Activated CD4-positive, alpha-beta T cell treated with anti-CD3 and anti-CD28 coated beads for 36 hours (primary cell): ENCODE measurements at regions of chr12 and their contacts with region 1.

Region 1: GRCh38 chr12:48851883-48852733 is at the start of gene DDX23:
- DNase-seq: peak; percentile 96
- ATAC-seq: peak; percentile 97
- H3K4me3 Mint-ChIP-seq: peak within 1 kb of the TSS; percentile 96
- H3K27ac Mint-ChIP-seq: peak within 1 kb of the TSS; percentile 99
- H3K4me1 Mint-ChIP-seq: peaks cover 30% of the 10 kb centered on the region
- H3K27me3 Mint-ChIP-seq: no peaks in the 10 kb centered on the region
- total RNA-seq, gene DDX23: 115 to 120 TPM

Region 2: DNA sequence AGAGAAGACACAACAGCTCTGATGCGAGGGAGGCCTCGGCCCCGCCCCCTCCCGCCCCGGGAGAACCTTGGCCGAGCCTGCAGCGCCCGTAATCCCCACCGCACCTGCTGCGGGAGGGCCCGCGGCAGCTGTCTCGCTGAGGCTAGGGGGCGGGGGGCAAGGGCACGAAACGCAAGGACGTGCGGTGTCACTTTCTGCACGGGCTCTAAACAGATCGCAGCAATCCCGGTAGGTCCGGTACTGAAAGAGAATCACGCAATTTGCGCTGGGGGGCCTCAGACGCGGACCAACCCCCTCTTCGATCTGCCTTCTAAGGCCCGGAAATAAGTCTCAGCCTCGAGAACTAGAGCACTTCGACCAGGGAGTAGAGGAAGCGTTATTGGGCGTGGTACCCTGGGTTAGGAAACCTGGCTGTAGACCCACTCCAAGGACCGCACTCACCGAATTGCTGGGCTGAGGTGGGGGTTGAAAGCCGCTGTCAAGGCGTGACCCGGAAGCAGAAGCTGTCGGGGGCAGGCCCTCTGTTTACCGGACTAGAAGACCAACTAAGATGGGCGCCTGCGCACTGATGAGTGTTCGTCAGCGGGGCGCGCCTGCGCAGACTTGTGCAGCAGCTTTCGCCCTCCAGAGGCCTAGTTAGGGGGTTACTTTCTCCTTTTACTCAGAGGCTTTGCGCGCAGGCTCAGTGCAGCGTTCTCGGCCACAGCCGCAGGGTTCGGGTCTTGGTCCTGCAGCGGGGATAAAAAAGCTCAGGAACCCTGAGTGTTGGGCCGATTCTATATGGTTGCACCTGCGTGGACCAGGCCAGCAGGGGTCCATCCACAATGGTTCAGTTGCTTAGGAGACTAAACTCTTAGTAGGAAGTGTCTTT is 694.9 kb before region 1 on chr12 and contains the start of gene ASB8:
- CTCF ChIA-PET with region 1: no interaction called
- POLR2A ChIA-PET with region 1: no interaction called
- intact Hi-C with region 1: loop called in 1 of 2 experiments (anchors 2 kb)
- DNase-seq: peak; percentile 100
- ATAC-seq: peak; percentile 96
- H3K4me3 Mint-ChIP-seq: peak within 1 kb of the TSS; percentile 88
- H3K27ac Mint-ChIP-seq: peak within 1 kb of the TSS; percentile 94
- H3K4me1 Mint-ChIP-seq: peaks cover 40% of the 10 kb centered on the region
- H3K27me3 Mint-ChIP-seq: no peaks in the 10 kb centered on the region
- total RNA-seq, gene ASB8: 28.8 to 33.0 TPM

Region 3: DNA sequence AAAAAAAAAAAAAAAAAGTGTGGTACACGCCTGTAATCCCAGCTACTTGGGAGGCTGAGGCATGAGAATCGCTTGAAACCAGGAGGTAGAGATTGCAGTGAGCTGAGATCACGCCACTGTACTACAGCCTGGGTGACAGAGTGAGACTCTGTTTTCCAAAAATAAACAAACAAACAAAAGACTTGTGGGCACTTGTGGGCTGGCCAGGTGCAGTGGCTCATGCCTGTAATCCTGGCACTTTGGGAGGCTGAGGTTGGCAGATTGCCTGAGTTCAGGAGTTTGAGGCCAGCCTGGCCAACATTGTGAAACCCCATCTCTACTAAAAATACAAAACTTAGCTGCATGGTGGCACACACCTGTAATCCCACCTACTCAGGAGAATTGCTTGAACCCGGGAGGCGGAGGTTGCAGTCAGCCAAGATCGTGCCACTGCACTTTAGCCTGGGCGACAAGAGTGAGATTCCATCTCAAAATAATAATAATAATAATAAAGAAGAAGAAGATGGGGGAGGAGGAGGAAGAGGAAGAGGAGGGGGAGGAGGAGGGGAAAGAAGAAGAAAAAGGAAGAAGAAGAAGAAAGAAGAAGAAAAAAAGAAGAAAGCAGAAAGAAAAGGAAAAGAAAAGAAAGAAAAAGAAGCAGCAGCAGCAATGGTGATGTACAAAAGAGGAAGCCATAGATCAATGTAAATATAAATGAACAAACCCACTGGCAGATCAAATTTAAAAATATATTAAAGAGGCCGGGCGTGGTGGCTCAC is 107.7 kb before region 1 on chr12:
- CTCF ChIA-PET with region 1: no interaction called
- POLR2A ChIA-PET with region 1: no interaction called
- intact Hi-C with region 1: no loop called
- DNase-seq: no peak
- ATAC-seq: no peak
- H3K4me3 Mint-ChIP-seq: no peak overlapping the region
- H3K27ac Mint-ChIP-seq: no peak overlapping the region
- H3K4me1 Mint-ChIP-seq: peaks cover 3% of the 10 kb centered on the region
- H3K27me3 Mint-ChIP-seq: peaks cover 10% of the 10 kb centered on the region

Region 4: DNA sequence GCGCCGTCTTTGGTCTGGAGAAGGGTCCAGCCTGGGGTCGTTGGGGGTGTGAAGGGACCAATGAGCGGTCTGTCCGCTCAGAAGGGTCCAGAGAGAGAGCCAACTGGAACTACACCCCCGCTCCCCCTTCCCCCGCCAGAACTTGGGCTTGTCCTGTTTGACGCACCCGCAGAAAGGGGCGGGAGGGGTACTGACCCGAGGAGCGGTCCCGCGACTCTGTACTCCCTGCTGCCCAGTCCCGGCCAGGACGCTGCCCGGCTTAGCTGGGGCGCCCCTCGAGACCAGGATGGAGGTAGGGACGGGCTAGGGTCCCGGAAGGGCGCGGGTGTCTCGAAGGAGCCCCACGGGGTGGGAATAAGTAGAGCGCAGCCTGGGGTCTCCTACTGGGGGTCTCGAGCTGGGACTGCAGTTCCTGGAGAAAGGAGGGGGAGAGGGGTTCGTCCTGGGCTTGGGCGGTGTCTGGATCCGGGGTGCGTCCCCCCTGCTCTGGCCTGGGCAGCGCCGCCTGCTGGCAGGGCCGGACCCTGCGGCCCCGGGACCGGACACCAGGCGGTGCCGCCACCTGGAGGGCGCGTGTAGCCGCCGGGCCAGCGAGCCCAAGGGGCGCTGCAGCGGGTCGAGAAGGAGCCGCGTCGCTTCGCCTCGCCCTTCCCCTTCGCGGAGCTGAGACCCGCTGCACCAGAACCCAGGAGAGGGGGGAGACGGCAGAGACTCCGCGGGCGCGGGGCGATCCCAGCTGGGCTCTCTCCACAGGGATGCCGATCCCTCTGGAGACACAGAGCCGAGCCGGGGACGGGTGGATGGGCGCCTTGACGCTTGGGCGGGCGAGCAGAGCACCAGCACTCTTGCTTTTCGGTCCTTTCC is 37.6 kb before region 1 on chr12:
- CTCF ChIA-PET with region 1: interaction called, 30 read pairs
- POLR2A ChIA-PET with region 1: no interaction called
- intact Hi-C with region 1: loop called in 1 of 2 experiments (anchors 1 kb)
- DNase-seq: peak; percentile 90
- ATAC-seq: peak; percentile 77
- H3K4me3 Mint-ChIP-seq: peak overlapping the region; percentile 81
- H3K27ac Mint-ChIP-seq: no peak overlapping the region
- H3K4me1 Mint-ChIP-seq: peaks cover 23% of the 10 kb centered on the region
- H3K27me3 Mint-ChIP-seq: peaks cover 12% of the 10 kb centered on the region

Region 5: DNA sequence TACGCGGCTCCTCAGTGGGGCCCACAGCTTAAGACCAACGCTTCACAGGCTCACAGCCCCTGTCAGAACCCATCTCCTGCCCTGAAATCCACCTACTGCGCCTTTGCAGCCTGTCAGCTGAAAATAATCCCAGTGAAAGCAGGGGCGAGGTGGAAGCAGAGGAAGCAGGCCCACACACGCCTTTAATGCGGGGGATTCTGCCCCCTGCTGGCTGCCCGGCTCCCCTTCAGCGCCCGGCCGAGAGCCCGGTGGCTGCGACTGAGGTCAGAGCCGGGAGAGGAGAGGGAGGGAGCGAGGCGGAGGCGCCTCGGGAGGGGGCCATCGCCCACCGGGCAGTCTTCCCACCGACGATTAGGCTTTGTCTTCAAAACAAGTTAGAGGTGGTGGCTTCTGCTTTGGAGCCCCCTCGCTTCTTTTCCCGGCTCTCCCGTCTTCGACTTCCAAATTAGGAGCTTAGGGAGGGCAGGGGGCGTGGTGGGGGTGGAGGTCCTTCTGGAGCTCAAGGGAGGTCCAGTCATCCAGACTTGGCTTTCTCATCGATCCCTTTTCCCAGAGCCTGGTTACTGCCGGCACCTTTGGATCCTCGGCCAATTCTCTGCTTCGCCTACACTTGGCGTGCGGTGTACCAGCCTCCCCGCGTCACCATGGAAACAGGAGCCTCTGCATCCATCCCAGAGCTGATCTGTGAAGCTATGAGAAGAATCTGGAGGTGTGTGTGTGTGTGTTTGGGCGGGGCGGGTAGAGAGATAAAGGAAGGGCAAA is 38.7 kb after region 1 on chr12:
- CTCF ChIA-PET with region 1: interaction called, 152 read pairs
- POLR2A ChIA-PET with region 1: no interaction called
- intact Hi-C with region 1: loop called (anchors 1 kb)
- DNase-seq: peak; percentile 89
- ATAC-seq: peak; percentile 99
- H3K4me3 Mint-ChIP-seq: peak overlapping the region; percentile 4
- H3K27ac Mint-ChIP-seq: no peak overlapping the region
- H3K4me1 Mint-ChIP-seq: peaks cover 4% of the 10 kb centered on the region
- H3K27me3 Mint-ChIP-seq: peaks cover 14% of the 10 kb centered on the region

Region 6: DNA sequence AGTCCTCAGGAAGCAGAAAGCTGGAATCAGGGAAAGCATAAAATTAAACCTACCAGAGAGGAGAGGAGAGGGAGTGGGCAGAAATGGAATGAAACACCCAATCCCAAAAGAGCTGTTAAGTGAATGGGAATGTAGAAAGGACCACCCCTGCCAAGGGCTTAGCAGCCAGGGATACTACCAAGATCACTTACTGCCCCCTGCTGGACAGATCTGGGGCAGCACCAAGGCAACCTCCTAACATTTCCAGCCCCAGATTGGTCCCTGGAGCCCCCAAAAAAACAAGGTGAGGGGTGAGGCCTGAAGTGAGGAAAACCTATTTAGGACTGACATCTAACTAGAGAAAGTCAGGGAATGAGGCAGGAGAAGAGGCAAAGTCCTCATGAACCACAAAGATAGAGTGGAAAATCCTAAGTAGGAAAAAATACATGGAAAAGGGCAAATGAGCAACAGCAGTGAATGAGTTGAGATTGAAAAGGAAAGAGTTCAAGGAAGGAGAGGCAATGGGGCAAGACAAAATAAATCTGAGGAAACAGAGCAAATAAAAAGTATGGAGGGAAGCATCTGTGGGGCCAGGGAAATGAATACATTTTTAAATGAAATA is 84.4 kb after region 1 on chr12:
- CTCF ChIA-PET with region 1: interaction called, 44 read pairs
- POLR2A ChIA-PET with region 1: no interaction called
- intact Hi-C with region 1: loop called (anchors 1 kb)
- DNase-seq: peak; percentile 89
- ATAC-seq: peak; percentile 82
- H3K4me3 Mint-ChIP-seq: no peak overlapping the region
- H3K27ac Mint-ChIP-seq: no peak overlapping the region
- H3K4me1 Mint-ChIP-seq: peaks cover 23% of the 10 kb centered on the region
- H3K27me3 Mint-ChIP-seq: no peaks in the 10 kb centered on the region

Region 7: GRCh38 chr12:48988030-48988649 is 136.0 kb after region 1 on chr12:
- CTCF ChIA-PET with region 1: interaction called, 33 read pairs
- POLR2A ChIA-PET with region 1: no interaction called
- intact Hi-C with region 1: loop called in 1 of 2 experiments (anchors 1 kb)
- DNase-seq: peak; percentile 89
- ATAC-seq: peak; percentile 85
- H3K4me3 Mint-ChIP-seq: no peak overlapping the region
- H3K27ac Mint-ChIP-seq: no peak overlapping the region
- H3K4me1 Mint-ChIP-seq: no peaks in the 10 kb centered on the region
- H3K27me3 Mint-ChIP-seq: peaks cover 41% of the 10 kb centered on the region

Region 8: GRCh38 chr12:49130151-49131050 is 278.3 kb after region 1 on chr12:
- CTCF ChIA-PET with region 1: interaction called, 5 read pairs
- POLR2A ChIA-PET with region 1: interaction called, 6 read pairs
- intact Hi-C with region 1: loop called in 1 of 2 experiments (anchors 2 kb)
- DNase-seq: peak; percentile 96
- ATAC-seq: peak; percentile 58
- H3K4me3 Mint-ChIP-seq: peak overlapping the region; percentile 99
- H3K27ac Mint-ChIP-seq: peak overlapping the region; percentile 97
- H3K4me1 Mint-ChIP-seq: peaks cover 44% of the 10 kb centered on the region
- H3K27me3 Mint-ChIP-seq: no peaks in the 10 kb centered on the region